ENCODE measurements at regions of chr22 and their contacts with region 1.

Region 1: GRCh38 chr22:20130739-20131596 is 636 bp upstream of the ZDHHC8 start:
- DNase-seq: peak; percentile 94
- H3K4me3 ChIP-seq: peak overlapping the region; percentile 77 to 100 (median 96)
- H3K27ac ChIP-seq: peak overlapping the region; percentile 91 to 99 (median 99)
- H3K4me1 ChIP-seq: peaks cover 0 to 48% (median 42%) of the 10 kb centered on the region in 4 donors
- H3K27me3 ChIP-seq: no peaks in the 10 kb centered on the region
- CTCF ChIP-seq: no peak
- EP300 ChIP-seq: no peak
- POLR2A ChIP-seq: no peak

Region 2: GRCh38 chr22:20020533-20021195 is 110.3 kb before region 1 on chr22 and contains the start of gene TANGO2:
- intact Hi-C with region 1: loop called (anchors 5 kb)
- DNase-seq: peak; percentile 94
- H3K4me3 ChIP-seq: peak within 1 kb of the TSS; percentile 94 to 99 (median 96)
- H3K27ac ChIP-seq: peak within 1 kb of the TSS; percentile 88 to 91 (median 88)
- H3K4me1 ChIP-seq: peaks cover 0 to 43% (median 34%) of the 10 kb centered on the region in 4 donors
- H3K27me3 ChIP-seq: no peaks in the 10 kb centered on the region
- CTCF ChIP-seq: no peak
- EP300 ChIP-seq: no peak
- POLR2A ChIP-seq: peak in 1 of 2 donors; percentile 16
- total RNA-seq, gene TANGO2: 24.2 to 36.6 (median 31.9) TPM

Region 3: DNA sequence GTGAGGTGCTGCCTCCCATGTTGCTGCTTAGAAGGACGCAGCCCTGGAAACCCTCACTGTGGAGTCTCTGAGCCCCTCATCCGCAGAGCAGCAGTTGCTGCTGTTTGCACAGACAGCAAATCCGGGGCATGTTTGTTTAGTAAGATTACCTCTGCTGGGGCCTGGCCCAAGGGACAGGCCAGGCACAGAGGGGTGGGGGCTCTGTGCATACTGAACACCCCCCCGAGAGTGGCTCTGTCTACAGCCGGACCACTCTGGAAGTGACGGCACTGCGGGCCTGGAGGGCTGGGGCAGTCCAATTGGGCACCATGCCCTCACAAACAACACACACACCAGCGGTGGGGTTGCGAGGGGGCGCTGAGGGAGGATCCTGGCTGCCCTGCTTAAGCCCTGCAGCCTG is 42.8 kb after region 1 on chr22:
- intact Hi-C with region 1: no loop called
- DNase-seq: no peak
- H3K4me3 ChIP-seq: no peak overlapping the region
- H3K27ac ChIP-seq: no peak overlapping the region
- H3K4me1 ChIP-seq: no peaks in the 10 kb centered on the region
- H3K27me3 ChIP-seq: no peaks in the 10 kb centered on the region
- CTCF ChIP-seq: no peak
- EP300 ChIP-seq: no peak
- POLR2A ChIP-seq: no peak